ENCODE measurements at regions of chr3 and their contacts with region 1.

Region 1: GRCh38 chr3:186540221-186540834 is 3.9 kb downstream of the CRYGS start:
- DNase-seq: peak; percentile 75
- H3K4me3 ChIP-seq: no peak overlapping the region
- CTCF ChIP-seq: peak; percentile 53

Region 2: DNA sequence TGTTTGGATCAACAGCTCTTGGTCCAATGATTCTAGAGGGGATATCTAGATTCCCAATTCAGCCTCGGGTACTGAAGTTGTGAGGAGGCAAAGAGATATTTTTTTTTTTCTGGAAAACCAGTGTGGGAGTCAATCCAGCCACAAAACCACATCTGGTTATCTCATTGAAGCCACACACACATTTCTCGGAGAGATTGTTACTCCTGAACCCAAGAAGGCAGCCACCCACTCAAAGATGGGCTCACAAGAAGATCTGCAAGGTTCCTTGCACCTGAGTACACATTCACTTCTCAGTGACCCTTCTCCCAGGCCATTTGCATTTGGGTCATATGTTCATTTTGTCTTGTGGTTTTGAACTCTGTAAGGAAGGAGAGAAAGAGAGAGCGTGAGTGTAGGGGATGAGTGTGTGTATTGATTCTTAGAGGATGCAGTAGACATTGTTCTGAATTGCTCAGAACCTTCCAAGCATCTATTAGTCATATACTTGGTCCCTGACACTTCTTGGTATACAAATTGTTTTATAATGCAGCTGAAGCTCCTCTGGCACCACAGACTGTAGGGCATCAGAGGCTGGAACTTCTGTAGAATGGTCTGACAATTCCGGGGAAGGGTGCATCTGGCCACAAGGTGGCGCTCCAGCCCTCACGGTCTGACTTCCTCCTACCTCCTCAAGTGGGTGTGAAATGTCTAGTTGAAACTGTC is 563.2 kb before region 1 on chr3:
- in situ Hi-C with region 1: loop called (anchors 25 kb)
- DNase-seq: peak; percentile 51
- H3K4me3 ChIP-seq: no peak overlapping the region
- CTCF ChIP-seq: peak; percentile 94

Region 3: GRCh38 chr3:186472456-186473008 is 67.8 kb before region 1 on chr3:
- in situ Hi-C with region 1: no loop called
- DNase-seq: no peak
- H3K4me3 ChIP-seq: no peak overlapping the region
- CTCF ChIP-seq: no peak

Region 4: GRCh38 chr3:186643493-186643892 is 103.2 kb after region 1 on chr3:
- in situ Hi-C with region 1: no loop called
- DNase-seq: no peak
- H3K4me3 ChIP-seq: no peak overlapping the region
- CTCF ChIP-seq: no peak